H1 (cell line): ENCODE measurements at regions of chr19 and their contacts with region 1.

Region 1: DNA sequence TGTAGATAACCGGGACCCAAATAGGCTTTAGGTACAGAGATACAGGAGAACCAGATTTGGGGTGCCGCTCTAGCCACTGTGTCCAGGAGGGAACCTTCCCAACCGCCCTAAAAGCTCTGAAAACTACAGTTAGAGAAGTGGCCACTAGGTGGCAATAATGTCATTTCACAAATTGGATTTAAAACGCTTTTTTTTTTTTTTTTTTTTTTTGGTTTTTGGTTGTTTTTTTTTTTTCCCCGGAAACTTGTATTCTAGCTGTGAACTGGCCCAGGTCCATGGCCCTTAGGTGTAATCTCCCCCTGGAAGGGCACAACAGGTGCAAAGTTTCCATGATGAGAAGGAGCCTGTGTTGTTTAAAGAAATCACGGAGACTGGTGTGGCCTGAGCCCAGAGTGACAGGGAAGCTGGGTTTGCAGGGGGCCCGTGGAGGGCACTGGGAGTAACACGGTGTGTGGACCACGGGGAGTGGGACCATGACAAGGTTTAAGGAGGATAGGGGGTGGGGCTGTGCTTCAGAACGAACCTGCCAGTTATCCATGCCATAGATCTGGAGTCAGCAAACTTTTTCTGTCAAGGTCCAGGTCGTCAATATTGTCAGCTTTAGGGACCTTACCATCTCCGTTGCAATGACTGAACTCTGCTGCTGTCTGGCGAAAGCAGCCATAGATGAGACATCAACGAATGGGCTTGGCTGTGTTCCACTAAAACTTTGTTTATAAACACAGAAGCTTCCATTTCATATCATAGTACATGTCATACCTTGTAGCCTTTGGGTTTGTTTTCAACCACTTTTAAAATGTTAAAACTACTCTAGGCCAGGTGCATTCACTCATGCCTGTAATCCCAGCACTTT is 10.1 kb downstream of the OR1I1 start:
- DNase-seq: peak in 1 of 2 experiments; percentile 54
- H3K4me3 ChIP-seq: no peak overlapping the region
- H3K27ac ChIP-seq: no peak overlapping the region
- H3K4me1 ChIP-seq: no peaks in the 10 kb centered on the region
- H3K27me3 ChIP-seq: peaks cover 0 to 3% (median 0%) of the 10 kb centered on the region in 4 experiments; a peak in 1 of 7 replicates
- CTCF ChIP-seq: peak in 2 of 3 experiments; percentile 50 to 52; a peak in 2 of 4 replicates
- EP300 ChIP-seq: no peak
- POLR2A ChIP-seq: no peak
- RAD21 ChIP-seq: peak; percentile 69 to 73

Region 2: DNA sequence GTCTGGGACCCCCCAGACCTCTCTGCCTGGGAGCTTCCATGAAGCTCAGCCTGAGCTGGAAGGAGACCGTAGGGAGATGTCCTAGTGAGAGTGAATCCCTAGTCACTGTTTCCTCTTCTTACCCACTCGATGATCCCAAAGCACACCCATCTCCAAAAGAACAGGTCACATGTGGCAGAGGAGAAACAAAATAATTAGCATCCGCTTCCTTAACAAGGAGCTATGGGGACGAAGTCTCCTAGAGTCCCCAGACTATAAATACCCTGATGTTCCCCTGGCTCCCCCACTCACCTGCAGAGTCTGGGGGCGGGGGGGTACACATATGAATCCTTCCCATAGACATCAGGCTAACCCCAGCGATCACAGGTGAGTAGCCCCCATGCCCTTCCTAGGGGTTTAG is 10.2 kb before region 1 on chr19 and contains the start of gene OR1I1:
- CTCF ChIA-PET with region 1: interaction called, 15 read pairs
- POLR2A ChIA-PET with region 1: interaction called, 3 read pairs
- DNase-seq: no peak
- H3K4me3 ChIP-seq: no peak within 1 kb of the TSS
- H3K27ac ChIP-seq: no peak within 1 kb of the TSS
- H3K4me1 ChIP-seq: no peaks in the 10 kb centered on the region
- H3K27me3 ChIP-seq: no peaks in the 10 kb centered on the region
- CTCF ChIP-seq: no peak
- EP300 ChIP-seq: no peak
- POLR2A ChIP-seq: no peak
- RAD21 ChIP-seq: no peak
- total RNA-seq, gene OR1I1: not detected in 2 replicates

Region 3: GRCh38 chr19:15107061-15108010 is 15.2 kb after region 1 on chr19 and contains the start of gene SYDE1:
- CTCF ChIA-PET with region 1: interaction called, 41 read pairs
- POLR2A ChIA-PET with region 1: interaction called, 5 read pairs
- DNase-seq: peak in 1 of 2 experiments; percentile 83
- H3K4me3 ChIP-seq: peak within 1 kb of the TSS; percentile 59 to 96 (median 66)
- H3K27ac ChIP-seq: peak within 1 kb of the TSS; percentile 75
- H3K4me1 ChIP-seq: peaks cover 4 to 10% (median 6%) of the 10 kb centered on the region in 4 experiments
- H3K27me3 ChIP-seq: no peaks in the 10 kb centered on the region
- CTCF ChIP-seq: no peak
- EP300 ChIP-seq: no peak
- POLR2A ChIP-seq: peak; percentile 56 to 61; a peak in 2 of 3 replicates
- RAD21 ChIP-seq: no peak
- total RNA-seq, gene SYDE1: 16.8 and 17.7 TPM in 2 replicates

Region 4: GRCh38 chr19:15265850-15266248 is 173.7 kb after region 1 on chr19:
- CTCF ChIA-PET with region 1: no interaction called
- POLR2A ChIA-PET with region 1: no interaction called
- DNase-seq: no peak
- H3K4me3 ChIP-seq: no peak overlapping the region
- H3K27ac ChIP-seq: no peak overlapping the region
- H3K4me1 ChIP-seq: no peaks in the 10 kb centered on the region
- H3K27me3 ChIP-seq: no peaks in the 10 kb centered on the region
- CTCF ChIP-seq: no peak
- EP300 ChIP-seq: no peak
- POLR2A ChIP-seq: no peak
- RAD21 ChIP-seq: no peak